Head of caudate nucleus (tissue), 42 donors: ENCODE measurements at regions of chr1 and their contacts with region 1.

Region 1: GRCh38 chr1:35298464-35298863 is 30.0 kb downstream of the ZMYM4 start:
- DNase-seq: peak in 19 of 42 donors; percentile 3 to 67 (median 31)

Region 2: DNA sequence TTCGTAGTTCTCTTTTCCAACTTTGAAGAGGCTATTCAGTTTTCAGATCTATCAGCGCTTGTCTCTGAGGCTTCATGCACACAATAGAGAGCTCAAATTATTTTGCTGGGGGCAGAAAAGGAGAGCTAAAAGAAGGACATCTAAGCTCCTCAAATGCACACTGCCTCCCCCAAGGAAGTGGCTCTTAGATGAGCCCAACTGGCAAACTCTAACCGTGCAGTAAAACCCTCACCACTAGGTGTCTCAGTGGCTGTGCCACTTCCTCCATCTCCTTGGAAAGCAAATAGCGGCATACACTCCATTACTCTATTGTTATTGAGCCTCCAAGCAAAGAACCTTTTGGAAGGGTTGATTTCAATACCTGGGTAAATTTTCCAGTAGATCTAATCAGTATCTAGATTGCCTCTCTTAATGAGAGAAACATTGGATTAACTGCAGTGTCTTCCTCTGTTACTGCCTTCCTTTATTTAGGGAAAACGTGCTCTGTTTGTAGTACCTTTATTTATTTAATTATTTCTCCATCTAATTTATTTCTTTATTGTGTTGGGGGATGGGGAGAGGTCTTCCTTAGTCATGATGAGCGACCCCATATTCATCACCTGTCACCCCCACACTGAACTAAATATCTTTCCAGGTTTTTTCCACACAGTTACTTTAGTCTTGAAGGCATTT is 96.3 kb before region 1 on chr1:
- intact Hi-C with region 1: loop called (anchors 10 kb)
- DNase-seq: peak; percentile 31 to 91 (median 77)